ENCODE measurements at regions of chr7 and their contacts with region 1.

Region 1: GRCh38 chr7:115654384-115655214 is 376.0 kb downstream of the TFEC start:
- DNase-seq: no peak
- ATAC-seq: no peak
- H3K4me3 ChIP-seq: no peak overlapping the region
- H3K4me3 Mint-ChIP-seq: no peak overlapping the region
- H3K27ac ChIP-seq: no peak overlapping the region
- H3K27ac Mint-ChIP-seq: no peak overlapping the region
- H3K4me1 ChIP-seq: no peaks in the 10 kb centered on the region
- H3K4me1 Mint-ChIP-seq: no peaks in the 10 kb centered on the region
- H3K27me3 ChIP-seq: no peaks in the 10 kb centered on the region
- H3K27me3 Mint-ChIP-seq: no peaks in the 10 kb centered on the region
- CTCF ChIP-seq: no peak

Region 2: GRCh38 chr7:115634633-115635032 is 20.0 kb before region 1 on chr7:
- CTCF ChIA-PET with region 1: no interaction called
- POLR2A ChIA-PET with region 1: no interaction called
- intact Hi-C with region 1: no loop called
- DNase-seq: no peak
- ATAC-seq: no peak
- H3K4me3 ChIP-seq: no peak overlapping the region
- H3K4me3 Mint-ChIP-seq: no peak overlapping the region
- H3K27ac ChIP-seq: no peak overlapping the region
- H3K27ac Mint-ChIP-seq: no peak overlapping the region
- H3K4me1 ChIP-seq: no peaks in the 10 kb centered on the region
- H3K4me1 Mint-ChIP-seq: no peaks in the 10 kb centered on the region
- H3K27me3 ChIP-seq: no peaks in the 10 kb centered on the region
- H3K27me3 Mint-ChIP-seq: no peaks in the 10 kb centered on the region
- CTCF ChIP-seq: no peak

Region 3: GRCh38 chr7:115679976-115680375 is 25.4 kb after region 1 on chr7:
- CTCF ChIA-PET with region 1: no interaction called
- POLR2A ChIA-PET with region 1: no interaction called
- intact Hi-C with region 1: no loop called
- DNase-seq: peak in 2 of 9 experiments; percentile 16 to 22
- ATAC-seq: no peak
- H3K4me3 ChIP-seq: no peak overlapping the region
- H3K4me3 Mint-ChIP-seq: no peak overlapping the region
- H3K27ac ChIP-seq: no peak overlapping the region
- H3K27ac Mint-ChIP-seq: no peak overlapping the region
- H3K4me1 ChIP-seq: no peaks in the 10 kb centered on the region
- H3K4me1 Mint-ChIP-seq: no peaks in the 10 kb centered on the region
- H3K27me3 ChIP-seq: no peaks in the 10 kb centered on the region
- H3K27me3 Mint-ChIP-seq: no peaks in the 10 kb centered on the region
- CTCF ChIP-seq: no peak

Region 4: GRCh38 chr7:115965796-115966475 is 311.3 kb after region 1 on chr7:
- CTCF ChIA-PET with region 1: no interaction called
- POLR2A ChIA-PET with region 1: no interaction called
- intact Hi-C with region 1: no loop called
- DNase-seq: no peak
- ATAC-seq: no peak
- H3K4me3 ChIP-seq: no peak overlapping the region
- H3K4me3 Mint-ChIP-seq: no peak overlapping the region
- H3K27ac ChIP-seq: no peak overlapping the region
- H3K27ac Mint-ChIP-seq: no peak overlapping the region
- H3K4me1 ChIP-seq: no peaks in the 10 kb centered on the region
- H3K4me1 Mint-ChIP-seq: no peaks in the 10 kb centered on the region
- H3K27me3 ChIP-seq: no peaks in the 10 kb centered on the region
- H3K27me3 Mint-ChIP-seq: no peaks in the 10 kb centered on the region
- CTCF ChIP-seq: no peak

Region 5: DNA sequence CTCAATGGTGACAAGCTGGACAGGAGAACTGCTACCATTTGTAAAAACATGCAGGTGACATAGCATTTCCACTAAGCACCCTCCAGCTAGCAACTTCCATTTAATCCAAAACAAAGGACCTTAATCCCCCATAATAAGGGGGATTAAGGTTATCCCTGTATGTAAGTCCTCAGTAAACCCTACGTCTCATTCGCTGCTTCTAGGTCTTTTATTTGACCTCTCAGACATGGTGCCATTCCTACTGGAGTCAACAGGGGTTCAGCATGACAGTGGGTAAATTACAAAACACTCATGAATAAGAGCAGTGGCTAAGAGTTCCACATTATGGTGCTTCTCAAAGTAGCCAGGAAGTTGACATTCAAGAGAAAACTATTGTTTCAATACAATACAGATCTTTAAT is 723.1 kb after region 1 on chr7:
- CTCF ChIA-PET with region 1: no interaction called
- POLR2A ChIA-PET with region 1: no interaction called
- intact Hi-C with region 1: loop called in 1 of 2 experiments (anchors 10 kb)
- DNase-seq: no peak
- ATAC-seq: no peak
- H3K4me3 ChIP-seq: no peak overlapping the region
- H3K4me3 Mint-ChIP-seq: no peak overlapping the region
- H3K27ac ChIP-seq: no peak overlapping the region
- H3K27ac Mint-ChIP-seq: no peak overlapping the region
- H3K4me1 ChIP-seq: no peaks in the 10 kb centered on the region
- H3K4me1 Mint-ChIP-seq: no peaks in the 10 kb centered on the region
- H3K27me3 ChIP-seq: no peaks in the 10 kb centered on the region
- H3K27me3 Mint-ChIP-seq: no peaks in the 10 kb centered on the region
- CTCF ChIP-seq: no peak